Mammary epithelial cell (primary cell): ENCODE measurements at regions of chr4 and their contacts with region 1.

Region 1: GRCh38 chr4:74451200-74451661 is 6.3 kb downstream of the AREG start:
- DNase-seq: peak; percentile 63
- H3K4me3 ChIP-seq: peak overlapping the region; percentile 83 to 93 (median 93)
- H3K27ac ChIP-seq: peak overlapping the region; percentile 99
- H3K4me1 ChIP-seq: peaks cover 11% of the 10 kb centered on the region
- H3K27me3 ChIP-seq: no peaks in the 10 kb centered on the region
- CTCF ChIP-seq: no peak

Region 2: DNA sequence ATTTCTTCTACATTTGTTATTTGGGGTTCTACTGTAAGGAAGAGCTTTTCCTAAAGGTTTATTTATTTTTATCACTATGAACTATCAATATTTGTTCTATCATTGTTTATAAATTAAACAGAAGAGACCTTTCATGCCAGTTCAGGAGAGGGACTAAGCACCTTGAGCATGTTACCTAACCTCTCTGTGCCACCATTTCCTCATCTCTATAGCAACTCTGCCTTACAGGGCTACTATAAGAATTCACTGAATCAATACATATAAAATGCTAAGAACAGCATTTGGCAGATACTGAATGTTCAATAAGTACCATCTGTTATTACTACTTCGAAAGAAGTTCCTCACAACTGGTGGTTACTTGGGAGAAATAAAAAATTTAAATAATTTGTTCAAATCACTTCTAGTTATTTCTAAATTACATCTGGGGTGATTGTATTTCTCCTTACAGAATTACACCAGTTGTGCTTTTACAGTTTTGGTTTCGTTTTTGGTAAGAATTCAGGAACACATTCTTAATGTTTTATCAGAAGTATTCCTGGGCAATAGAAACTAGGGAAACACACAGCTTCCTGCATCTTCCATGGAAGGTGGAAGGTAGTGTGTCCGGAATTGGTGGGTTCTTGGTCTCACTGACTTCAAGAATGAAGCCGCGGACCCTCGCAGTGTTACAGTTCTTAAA is 53.3 kb before region 1 on chr4:
- CTCF ChIA-PET with region 1: no interaction called
- dilution Hi-C with region 1: loop called (anchors 10 kb)
- in situ Hi-C with region 1: no loop called
- intact Hi-C with region 1: no loop called
- DNase-seq: no peak
- H3K4me3 ChIP-seq: no peak overlapping the region
- H3K27ac ChIP-seq: no peak overlapping the region
- H3K4me1 ChIP-seq: peaks cover 18% of the 10 kb centered on the region
- H3K27me3 ChIP-seq: no peaks in the 10 kb centered on the region
- CTCF ChIP-seq: no peak

Region 3: GRCh38 chr4:74499986-74500781 is 49.0 kb after region 1 on chr4:
- CTCF ChIA-PET with region 1: no interaction called
- dilution Hi-C with region 1: no loop called
- in situ Hi-C with region 1: loop called in 1 of 2 experiments (anchors 10 kb)
- intact Hi-C with region 1: no loop called
- DNase-seq: peak; percentile 37
- H3K4me3 ChIP-seq: no peak overlapping the region
- H3K27ac ChIP-seq: no peak overlapping the region
- H3K4me1 ChIP-seq: peaks cover 48% of the 10 kb centered on the region
- H3K27me3 ChIP-seq: no peaks in the 10 kb centered on the region
- CTCF ChIP-seq: no peak

Region 4: GRCh38 chr4:74545488-74545887 is 94.3 kb after region 1 on chr4:
- CTCF ChIA-PET with region 1: no interaction called
- dilution Hi-C with region 1: no loop called
- in situ Hi-C with region 1: no loop called
- intact Hi-C with region 1: no loop called
- DNase-seq: peak; percentile 51
- H3K4me3 ChIP-seq: no peak overlapping the region
- H3K27ac ChIP-seq: peak overlapping the region; percentile 94
- H3K4me1 ChIP-seq: peaks cover 51% of the 10 kb centered on the region
- H3K27me3 ChIP-seq: no peaks in the 10 kb centered on the region
- CTCF ChIP-seq: no peak

Region 5: GRCh38 chr4:74793757-74794340 is 342.6 kb after region 1 on chr4:
- CTCF ChIA-PET with region 1: no interaction called
- dilution Hi-C with region 1: no loop called
- in situ Hi-C with region 1: no loop called
- intact Hi-C with region 1: loop called (anchors 5 kb)
- DNase-seq: peak; percentile 44
- H3K4me3 ChIP-seq: peak overlapping the region; percentile 68 to 84 (median 71)
- H3K27ac ChIP-seq: peak overlapping the region; percentile 37
- H3K4me1 ChIP-seq: peaks cover 12% of the 10 kb centered on the region
- H3K27me3 ChIP-seq: no peaks in the 10 kb centered on the region
- CTCF ChIP-seq: peak; percentile 24 to 59